Heart left ventricle (tissue), 16 donors: ENCODE measurements at regions of chr9 and their contacts with region 1.

Region 1: DNA sequence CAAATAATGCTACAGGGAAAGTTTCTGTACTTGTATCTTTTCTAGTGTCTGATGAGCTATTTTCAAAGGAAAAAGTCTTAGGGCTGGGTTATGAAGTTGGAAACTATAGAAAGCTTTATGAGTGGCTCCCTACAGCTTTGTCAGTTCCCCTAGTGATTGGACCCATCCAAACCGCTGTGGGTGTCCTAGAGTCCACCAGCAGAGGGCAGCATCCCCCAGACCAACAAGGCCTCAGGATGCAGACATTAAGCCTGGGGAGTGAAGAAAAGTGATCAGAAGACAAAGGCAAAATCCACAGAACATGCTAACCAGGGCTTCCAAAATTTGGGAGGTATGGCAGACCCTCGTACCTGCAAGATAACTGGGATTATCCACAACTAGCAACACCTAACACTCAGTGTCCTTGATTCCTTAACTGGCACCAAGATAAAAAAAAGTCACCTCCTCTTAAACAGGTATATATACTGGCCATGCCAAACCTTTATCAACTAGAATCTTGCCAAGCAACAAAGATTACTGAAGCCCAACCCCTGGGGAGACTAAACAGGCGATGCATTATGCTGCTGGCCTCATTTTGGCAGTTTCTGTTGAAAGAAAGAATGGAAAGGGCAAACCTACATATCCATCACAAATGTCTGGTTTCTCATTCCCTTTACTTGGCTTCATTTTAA is 110.4 kb upstream of the NR5A1 start:
- DNase-seq: peak; percentile 59 to 80 (median 78)
- ATAC-seq: peak; percentile 86 to 94 (median 92)
- H3K4me3 ChIP-seq: no peak overlapping the region
- H3K27ac ChIP-seq: no peak overlapping the region
- H3K4me1 ChIP-seq: peaks cover 0 to 9% (median 1%) of the 10 kb centered on the region in 12 donors
- H3K27me3 ChIP-seq: no peaks in the 10 kb centered on the region
- CTCF ChIP-seq: peak; percentile 80 to 94 (median 88)
- POLR2A ChIP-seq: no peak

Region 2: GRCh38 chr9:124551472-124552272 is 65.9 kb before region 1 on chr9:
- intact Hi-C with region 1: loop called in 1 of 10 experiments (anchors 10 kb)
- DNase-seq: peak in 4 of 5 donors; percentile 15 to 32 (median 27)
- ATAC-seq: peak; percentile 68 to 85 (median 76)
- H3K4me3 ChIP-seq: no peak overlapping the region
- H3K27ac ChIP-seq: no peak overlapping the region
- H3K4me1 ChIP-seq: peaks cover 0 to 17% (median 0%) of the 10 kb centered on the region in 12 donors
- H3K27me3 ChIP-seq: no peaks in the 10 kb centered on the region
- CTCF ChIP-seq: peak in 11 of 12 donors; percentile 15 to 61 (median 50)
- POLR2A ChIP-seq: no peak

Region 3: GRCh38 chr9:124658165-124659017 is 40.8 kb after region 1 on chr9:
- intact Hi-C with region 1: loop called in 1 of 10 experiments (anchors 5 kb)
- DNase-seq: peak; percentile 78 to 85 (median 84)
- ATAC-seq: peak; percentile 95 to 97 (median 96)
- H3K4me3 ChIP-seq: peak overlapping the region; percentile 26 to 71 (median 60)
- H3K27ac ChIP-seq: peak overlapping the region; percentile 33 to 93 (median 83)
- H3K4me1 ChIP-seq: peaks cover 0 to 36% (median 15%) of the 10 kb centered on the region in 12 donors
- H3K27me3 ChIP-seq: no peaks in the 10 kb centered on the region
- CTCF ChIP-seq: no peak
- POLR2A ChIP-seq: peak in 1 of 2 donors; percentile 62

Region 4: GRCh38 chr9:124697326-124698200 is 80.0 kb after region 1 on chr9:
- intact Hi-C with region 1: loop called in 1 of 10 experiments (anchors 5 kb)
- DNase-seq: no peak
- ATAC-seq: peak in 2 of 4 donors; percentile 53 to 68
- H3K4me3 ChIP-seq: no peak overlapping the region
- H3K27ac ChIP-seq: no peak overlapping the region
- H3K4me1 ChIP-seq: peaks cover 0 to 18% (median 9%) of the 10 kb centered on the region in 12 donors
- H3K27me3 ChIP-seq: no peaks in the 10 kb centered on the region
- CTCF ChIP-seq: no peak
- POLR2A ChIP-seq: no peak

Region 5: GRCh38 chr9:124708633-124709291 is 91.2 kb after region 1 on chr9:
- intact Hi-C with region 1: loop called (anchors 1 to 2 kb)
- DNase-seq: no peak
- ATAC-seq: no peak
- H3K4me3 ChIP-seq: no peak overlapping the region
- H3K27ac ChIP-seq: no peak overlapping the region
- H3K4me1 ChIP-seq: peaks cover 0 to 13% (median 0%) of the 10 kb centered on the region in 12 donors
- H3K27me3 ChIP-seq: no peaks in the 10 kb centered on the region
- CTCF ChIP-seq: no peak
- POLR2A ChIP-seq: no peak

Region 6: GRCh38 chr9:124758061-124758460 is 140.5 kb after region 1 on chr9:
- intact Hi-C with region 1: loop called in 1 of 10 experiments (anchors 5 kb)
- DNase-seq: peak in 1 of 5 donors; percentile 26
- ATAC-seq: peak in 3 of 4 donors; percentile 34 to 61 (median 42)
- H3K4me3 ChIP-seq: peak overlapping the region in 2 of 12 donors; percentile 8 to 10
- H3K27ac ChIP-seq: peak overlapping the region in 1 of 12 donors; percentile 63
- H3K4me1 ChIP-seq: peaks cover 0 to 16% (median 0%) of the 10 kb centered on the region in 12 donors
- H3K27me3 ChIP-seq: peaks cover 0 to 40% (median 0%) of the 10 kb centered on the region in 9 donors
- CTCF ChIP-seq: no peak
- POLR2A ChIP-seq: no peak

Region 7: GRCh38 chr9:124852829-124853531 is 235.4 kb after region 1 on chr9 and contains the start of gene WDR38:
- intact Hi-C with region 1: loop called in 1 of 10 experiments (anchors 10 kb)
- DNase-seq: peak; percentile 79 to 90 (median 86)
- ATAC-seq: peak; percentile 89 to 92 (median 91)
- H3K4me3 ChIP-seq: peak within 1 kb of the TSS in 11 of 12 donors; percentile 17 to 60 (median 49)
- H3K27ac ChIP-seq: peak within 1 kb of the TSS; percentile 42 to 95 (median 86)
- H3K4me1 ChIP-seq: peaks cover 0 to 41% (median 20%) of the 10 kb centered on the region in 12 donors
- H3K27me3 ChIP-seq: no peaks in the 10 kb centered on the region
- CTCF ChIP-seq: peak; percentile 96 to 100 (median 98)
- POLR2A ChIP-seq: peak in 1 of 2 donors; percentile 23
- total RNA-seq, gene WDR38: not detected